ENCODE measurements at regions of chr11 and their contacts with region 1.

Region 1: GRCh38 chr11:126083829-126084607 is 21.4 kb upstream of the CDON start:
- DNase-seq: peak; percentile 59
- ATAC-seq: peak; percentile 98
- H3K4me3 Mint-ChIP-seq: peak overlapping the region; percentile 81
- H3K27ac Mint-ChIP-seq: peak overlapping the region; percentile 98
- H3K4me1 Mint-ChIP-seq: peaks cover 20% of the 10 kb centered on the region
- H3K27me3 Mint-ChIP-seq: peaks cover 5% of the 10 kb centered on the region

Region 2: GRCh38 chr11:125869521-125869920 is 214.5 kb before region 1 on chr11:
- POLR2A ChIA-PET with region 1: no interaction called
- DNase-seq: no peak
- ATAC-seq: no peak
- H3K4me3 Mint-ChIP-seq: no peak overlapping the region
- H3K27ac Mint-ChIP-seq: no peak overlapping the region
- H3K4me1 Mint-ChIP-seq: peaks cover 2% of the 10 kb centered on the region
- H3K27me3 Mint-ChIP-seq: peaks cover 3% of the 10 kb centered on the region

Region 3: DNA sequence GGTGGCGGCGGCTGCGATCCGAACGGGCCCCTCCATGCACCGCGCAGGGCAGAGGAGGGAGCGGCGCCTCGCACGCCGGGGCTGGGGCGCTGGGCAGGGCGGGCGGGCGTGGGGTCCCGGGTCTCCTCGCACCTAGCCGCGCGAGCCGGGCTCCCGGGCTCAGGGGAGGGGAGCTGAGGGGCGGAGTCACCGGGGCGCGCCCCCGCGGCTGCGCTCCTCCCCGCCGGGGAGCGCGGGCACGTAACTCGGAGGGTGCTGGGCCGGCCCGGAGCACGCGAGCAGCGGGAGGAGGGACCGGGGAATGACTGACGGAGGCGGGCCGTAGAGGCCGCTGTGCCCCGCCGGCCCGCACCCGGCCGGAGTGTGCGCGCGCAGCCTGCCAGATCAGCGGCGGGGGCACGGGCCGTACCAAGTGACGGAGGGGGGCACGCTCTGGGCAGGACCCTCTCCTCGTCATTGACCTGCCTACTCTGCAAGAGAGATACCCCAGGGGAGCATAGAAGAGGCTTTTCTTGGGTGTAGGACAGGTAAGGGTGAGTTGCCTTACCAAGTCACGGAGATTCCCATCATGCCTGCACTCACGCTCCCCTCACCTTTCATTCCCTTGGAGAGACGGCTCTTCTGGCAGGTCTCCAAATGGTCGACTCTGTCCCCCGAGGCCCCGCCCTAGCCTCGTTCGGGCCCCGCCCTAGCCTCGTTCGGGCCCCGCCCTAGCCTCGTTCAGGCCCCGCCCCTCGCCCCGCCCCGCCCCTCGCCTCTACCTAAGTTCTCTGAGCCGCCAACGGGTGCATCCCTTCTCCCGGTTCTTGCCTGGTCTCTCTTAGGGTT is 21.1 kb before region 1 on chr11 and contains the start of gene CDON:
- POLR2A ChIA-PET with region 1: interaction called, 10 read pairs
- DNase-seq: peak; percentile 96
- ATAC-seq: peak; percentile 97
- H3K4me3 Mint-ChIP-seq: peak within 1 kb of the TSS; percentile 84
- H3K27ac Mint-ChIP-seq: peak within 1 kb of the TSS; percentile 96
- H3K4me1 Mint-ChIP-seq: peaks cover 4% of the 10 kb centered on the region
- H3K27me3 Mint-ChIP-seq: peaks cover 57% of the 10 kb centered on the region
- total RNA-seq, gene CDON: 3.4 to 3.9 TPM

Measured in activated naive CD8-positive, alpha-beta T cell treated with anti-CD3 and anti-CD28 coated beads, Interleukin-2, amount 10 ng/mL, durations not matched to agents 7 days and 5 days (primary cell).